Mucosa of descending colon (tissue), 3 donors: ENCODE measurements at regions of chr3 and their contacts with region 1.

Region 1: DNA sequence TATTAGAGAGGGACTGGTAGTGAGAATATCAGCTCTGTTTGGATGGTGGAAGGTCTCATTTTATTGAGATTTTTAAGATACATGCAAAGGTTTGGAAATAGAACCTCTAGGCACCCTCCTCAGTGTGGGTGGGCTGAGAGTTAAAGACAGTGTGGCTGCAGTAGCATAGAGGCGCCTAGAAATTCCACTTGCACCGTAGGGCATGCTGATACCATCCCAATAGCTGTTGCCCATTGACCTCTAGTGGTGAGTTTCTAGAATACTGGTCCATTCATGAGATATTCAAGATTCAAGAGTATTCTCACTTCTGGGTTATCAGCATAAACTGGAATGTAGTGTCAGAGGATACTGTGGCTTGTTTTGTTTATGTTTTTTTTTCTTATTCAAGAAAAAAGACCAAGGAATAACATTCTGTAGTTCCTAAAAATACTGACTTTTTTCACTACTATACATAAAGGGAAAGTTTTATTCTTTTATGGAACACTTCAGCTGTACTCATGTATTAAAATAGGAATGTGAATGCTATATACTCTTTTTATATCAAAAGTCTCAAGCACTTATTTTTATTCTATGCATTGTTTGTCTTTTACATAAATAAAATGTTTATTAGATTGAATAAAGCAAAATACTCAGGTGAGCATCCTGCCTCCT is 87.2 kb downstream of the TGFBR2 start:
- DNase-seq: peak in 1 of 3 donors; percentile 61
- ATAC-seq: peak; percentile 60
- H3K4me3 ChIP-seq: no peak overlapping the region
- H3K4me1 ChIP-seq: peaks cover 14% of the 10 kb centered on the region
- CTCF ChIP-seq: peak; percentile 44

Region 2: DNA sequence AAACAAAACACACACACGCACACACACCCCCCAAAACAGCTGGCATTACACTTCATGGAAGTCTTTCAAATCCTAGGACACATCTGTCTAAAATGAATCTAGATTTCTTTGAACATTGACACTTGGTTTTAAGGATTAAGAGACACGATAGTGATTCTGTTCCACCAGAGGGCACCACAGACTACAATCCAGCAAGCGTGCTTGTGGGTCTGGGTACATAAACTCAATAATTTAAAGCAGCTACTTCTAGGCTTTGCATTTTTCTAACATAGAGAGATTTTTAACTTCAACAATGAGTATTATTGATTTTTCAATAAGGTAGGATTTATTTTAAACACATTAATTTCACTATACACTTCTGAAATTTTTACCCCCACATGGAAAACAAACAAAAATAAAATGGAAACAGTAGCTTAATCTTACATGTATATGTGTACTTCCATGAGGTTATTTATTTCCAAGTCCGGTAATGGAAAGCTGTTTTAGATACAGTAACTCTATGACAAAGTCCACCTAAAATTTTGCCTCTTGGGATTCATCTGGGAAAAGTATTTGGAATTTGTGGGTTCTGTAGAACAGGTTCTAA is 651.2 kb before region 1 on chr3:
- intact Hi-C with region 1: loop called in 1 of 2 experiments (anchors 10 kb)
- DNase-seq: peak in 2 of 3 donors; percentile 35 to 86
- ATAC-seq: peak; percentile 71
- H3K4me3 ChIP-seq: no peak overlapping the region
- H3K4me1 ChIP-seq: no peaks in the 10 kb centered on the region
- CTCF ChIP-seq: peak; percentile 41

Region 3: GRCh38 chr3:30112902-30113484 is 580.6 kb before region 1 on chr3:
- intact Hi-C with region 1: loop called (anchors 10 kb)
- DNase-seq: no peak
- ATAC-seq: peak; percentile 32
- H3K4me3 ChIP-seq: no peak overlapping the region
- H3K4me1 ChIP-seq: peaks cover 6% of the 10 kb centered on the region
- CTCF ChIP-seq: peak; percentile 19

Region 4: DNA sequence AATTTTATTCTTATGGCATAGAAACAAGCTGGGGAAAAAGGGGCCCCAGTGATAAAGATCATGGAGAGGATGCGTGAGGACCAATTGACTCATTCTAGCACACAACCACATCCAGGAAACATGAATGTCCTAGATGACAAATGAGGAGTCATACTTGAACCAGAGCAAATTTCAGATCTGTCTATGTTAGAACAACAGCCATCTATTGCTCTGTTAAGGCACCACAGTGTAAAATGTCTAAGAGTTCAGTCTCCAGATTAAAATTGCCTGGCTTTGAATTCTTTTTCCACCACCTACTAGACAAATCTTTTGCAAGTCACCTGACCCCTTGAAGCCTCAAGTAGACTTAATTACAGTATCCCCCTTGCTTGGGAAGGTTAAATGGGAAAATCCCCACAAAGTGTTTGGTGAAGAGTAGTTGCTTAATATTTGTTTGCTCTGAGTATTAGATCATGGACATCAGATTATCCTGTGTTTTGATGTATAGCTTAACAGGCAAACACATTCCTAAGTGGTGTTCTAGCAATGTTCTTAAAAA is 345.8 kb before region 1 on chr3:
- intact Hi-C with region 1: no loop called
- DNase-seq: no peak
- ATAC-seq: peak; percentile 37
- H3K4me3 ChIP-seq: no peak overlapping the region
- H3K4me1 ChIP-seq: peaks cover 8% of the 10 kb centered on the region
- CTCF ChIP-seq: no peak

Region 5: GRCh38 chr3:30511524-30512278 is 181.9 kb before region 1 on chr3:
- intact Hi-C with region 1: loop called in 1 of 2 experiments (anchors 10 kb)
- DNase-seq: peak in 1 of 3 donors; percentile 32
- ATAC-seq: peak; percentile 33
- H3K4me3 ChIP-seq: no peak overlapping the region
- H3K4me1 ChIP-seq: no peaks in the 10 kb centered on the region
- CTCF ChIP-seq: no peak

Region 6: DNA sequence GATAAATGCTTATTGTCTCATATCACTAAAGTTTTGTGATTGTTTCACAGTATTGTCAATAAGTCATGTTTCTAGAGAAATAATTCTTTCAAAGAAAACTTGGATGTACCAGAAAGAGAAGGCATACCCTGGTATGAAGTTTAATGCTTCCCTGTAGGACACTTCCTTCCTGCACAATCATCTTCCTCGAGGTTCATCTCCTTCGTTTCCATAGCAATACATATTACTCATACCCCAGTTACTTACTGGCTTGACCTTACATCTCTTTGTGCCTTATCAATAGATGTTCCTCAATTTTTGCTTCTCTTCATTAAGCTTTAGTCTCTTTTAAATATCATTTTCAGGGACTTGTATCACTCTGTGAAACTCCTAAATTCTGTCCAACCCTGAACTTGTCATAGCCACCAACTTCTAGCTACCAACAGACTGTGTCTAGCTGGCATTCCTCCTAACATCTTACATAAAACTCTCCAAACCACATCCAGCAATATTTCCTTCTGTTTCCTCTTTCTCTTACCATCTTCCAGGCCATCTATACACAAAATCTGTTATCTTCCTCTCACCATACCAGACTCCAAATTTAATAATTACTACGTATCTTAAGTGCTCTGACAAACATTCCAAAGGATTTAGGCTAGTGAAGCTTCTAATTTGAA is 66.6 kb after region 1 on chr3:
- intact Hi-C with region 1: no loop called
- DNase-seq: no peak
- ATAC-seq: no peak
- H3K4me3 ChIP-seq: no peak overlapping the region
- H3K4me1 ChIP-seq: peaks cover 3% of the 10 kb centered on the region
- CTCF ChIP-seq: no peak